ENCODE measurements at regions of chr5 and their contacts with region 1.

Region 1: GRCh38 chr5:76771705-76772405 is 47.0 kb upstream of the F2RL1 start:
- DNase-seq: no peak
- H3K4me3 ChIP-seq: no peak overlapping the region
- CTCF ChIP-seq: no peak

Region 2: DNA sequence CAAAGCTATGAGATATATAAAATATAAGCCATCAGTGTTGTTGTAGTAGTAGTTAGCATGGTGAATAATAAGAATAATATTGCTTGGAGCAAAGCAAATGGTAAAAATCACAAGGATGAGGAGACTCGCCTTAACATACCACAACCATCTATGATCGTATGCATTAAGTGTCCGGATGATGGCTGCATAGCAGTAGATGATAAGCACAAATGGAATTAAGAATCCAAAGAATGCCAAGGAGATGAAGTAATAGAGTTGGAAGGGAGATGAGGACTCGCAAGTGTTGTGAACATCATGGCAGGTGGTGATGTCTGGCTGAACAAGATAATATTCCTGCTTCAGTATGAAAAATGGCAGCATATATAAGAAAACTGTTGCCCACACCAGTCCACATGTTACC is 154.2 kb before region 1 on chr5:
- CTCF ChIA-PET with region 1: interaction called, 363 read pairs
- POLR2A ChIA-PET with region 1: no interaction called
- DNase-seq: peak; percentile 92
- H3K4me3 ChIP-seq: no peak overlapping the region
- CTCF ChIP-seq: no peak

Region 3: GRCh38 chr5:76657683-76658311 is 114.1 kb before region 1 on chr5:
- CTCF ChIA-PET with region 1: interaction called, 24 read pairs
- POLR2A ChIA-PET with region 1: no interaction called
- DNase-seq: no peak
- H3K4me3 ChIP-seq: no peak overlapping the region
- CTCF ChIP-seq: no peak

Region 4: DNA sequence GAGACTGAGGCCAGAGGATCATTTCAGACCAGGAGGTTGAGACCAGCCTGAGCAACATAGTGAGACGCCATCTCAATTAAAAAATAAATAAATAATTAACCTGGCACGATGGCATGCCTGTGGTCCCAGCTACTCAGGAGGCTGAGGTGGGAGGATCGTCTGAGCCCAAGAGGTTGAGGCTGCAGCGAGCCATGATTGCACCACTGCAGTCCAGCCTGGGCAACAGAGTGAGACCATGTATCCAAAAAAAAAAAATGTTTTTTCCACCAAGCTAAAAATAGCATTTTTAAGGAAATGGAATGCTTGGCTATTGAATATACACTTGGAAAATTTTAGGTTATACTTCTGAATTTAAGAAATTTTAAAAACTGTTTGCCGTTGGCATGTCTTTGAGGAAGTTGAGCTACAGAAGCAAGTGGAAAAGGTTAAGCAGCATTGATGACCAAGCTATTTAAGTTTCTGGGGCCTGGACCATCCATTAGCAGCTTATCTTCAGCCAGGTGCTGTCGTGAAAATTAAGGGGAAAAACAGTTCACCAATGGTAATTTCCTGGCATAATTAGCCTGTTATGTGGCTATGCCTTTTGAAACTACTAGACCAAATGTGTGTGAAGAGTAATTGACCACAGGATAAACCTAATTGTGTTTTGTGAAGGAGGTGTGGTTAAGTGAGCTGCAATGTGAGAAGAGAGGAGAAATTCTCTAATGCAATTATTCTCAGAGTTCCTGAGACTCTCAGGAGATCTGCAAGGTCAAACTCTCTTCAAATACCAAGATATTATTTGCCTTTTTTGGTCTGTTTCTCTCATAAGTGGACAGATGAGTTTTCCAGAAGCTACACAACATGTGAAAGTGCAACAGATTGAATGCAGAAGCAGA is 34.9 kb before region 1 on chr5:
- CTCF ChIA-PET with region 1: interaction called, 20 read pairs
- POLR2A ChIA-PET with region 1: no interaction called
- DNase-seq: no peak
- H3K4me3 ChIP-seq: no peak overlapping the region
- CTCF ChIP-seq: no peak

Region 5: DNA sequence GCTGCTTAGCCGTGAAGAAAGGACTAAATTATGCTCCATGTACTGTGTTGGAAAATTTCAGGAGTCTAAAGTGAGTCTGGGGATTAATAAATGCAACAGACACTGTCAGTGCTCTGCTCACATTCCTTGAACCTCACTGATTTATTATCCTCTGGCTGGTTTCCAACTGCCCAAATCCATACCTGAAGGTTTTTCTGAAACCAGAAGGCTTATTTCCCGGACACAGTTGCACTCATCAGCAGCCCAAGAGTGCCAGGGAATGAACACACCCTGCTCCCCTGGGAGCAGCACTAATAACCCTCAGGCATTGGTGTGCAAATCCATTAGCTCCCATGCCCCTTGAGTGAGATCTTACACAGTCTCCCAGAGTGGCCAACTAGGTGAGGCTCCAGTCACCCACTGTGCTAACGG is 17.2 kb before region 1 on chr5:
- CTCF ChIA-PET with region 1: interaction called, 35 read pairs
- POLR2A ChIA-PET with region 1: no interaction called
- DNase-seq: no peak
- H3K4me3 ChIP-seq: no peak overlapping the region
- CTCF ChIP-seq: no peak

Region 6: DNA sequence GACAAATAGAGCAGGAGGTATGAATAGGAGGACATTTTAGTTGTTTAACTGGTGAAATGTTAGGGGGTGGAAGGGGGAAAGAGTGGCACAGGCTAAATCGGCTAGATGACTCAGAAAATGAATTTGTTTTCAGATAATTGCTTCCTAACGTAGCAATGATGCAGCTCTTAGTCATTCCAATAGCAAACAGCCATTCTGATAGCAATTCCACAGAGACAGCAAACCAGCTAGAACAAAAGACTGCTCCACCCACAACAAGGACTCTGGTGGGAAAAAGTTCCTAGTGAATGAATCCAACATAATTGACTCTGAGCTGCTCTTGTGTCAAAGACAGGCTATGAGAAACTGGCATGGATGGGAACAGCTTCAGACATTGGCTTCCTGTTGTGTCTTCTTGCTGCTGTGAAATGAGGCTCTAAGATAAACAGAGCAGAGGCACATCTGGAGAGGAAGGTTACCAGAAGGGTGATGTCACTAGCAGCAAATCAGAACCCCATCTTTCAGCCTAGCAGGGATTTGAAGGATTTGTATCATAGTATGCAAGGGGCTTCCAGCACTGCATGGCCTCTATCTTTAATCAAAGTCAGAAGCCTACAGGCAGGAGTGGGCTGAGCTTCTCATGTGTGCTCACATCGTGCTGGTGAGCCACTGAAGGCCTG is 18.9 kb after region 1 on chr5:
- CTCF ChIA-PET with region 1: interaction called, 41 read pairs
- POLR2A ChIA-PET with region 1: no interaction called
- DNase-seq: peak; percentile 91
- H3K4me3 ChIP-seq: no peak overlapping the region
- CTCF ChIP-seq: no peak

Region 7: DNA sequence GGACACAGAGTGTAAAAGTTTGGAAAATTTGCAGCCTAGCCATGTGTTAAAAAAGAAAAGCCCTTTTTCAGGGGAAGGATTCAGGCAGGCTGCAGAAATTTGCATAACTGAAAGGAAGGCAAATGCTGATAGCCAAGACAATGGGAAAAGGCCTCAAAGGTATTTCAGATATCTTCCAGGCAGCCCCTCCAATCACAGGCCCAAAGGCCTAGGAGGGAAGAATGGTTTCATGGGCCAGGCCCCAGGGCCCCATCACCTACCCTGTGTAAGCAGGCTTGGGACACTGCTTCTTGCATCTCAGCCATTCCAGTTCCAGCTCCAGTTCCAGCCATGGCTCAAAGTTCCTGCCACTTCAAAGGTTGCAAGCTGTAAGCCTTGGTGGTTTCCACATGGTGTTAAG is 82.8 kb after region 1 on chr5:
- CTCF ChIA-PET with region 1: no interaction called
- POLR2A ChIA-PET with region 1: no interaction called
- DNase-seq: no peak
- H3K4me3 ChIP-seq: no peak overlapping the region
- CTCF ChIP-seq: no peak

Region 8: DNA sequence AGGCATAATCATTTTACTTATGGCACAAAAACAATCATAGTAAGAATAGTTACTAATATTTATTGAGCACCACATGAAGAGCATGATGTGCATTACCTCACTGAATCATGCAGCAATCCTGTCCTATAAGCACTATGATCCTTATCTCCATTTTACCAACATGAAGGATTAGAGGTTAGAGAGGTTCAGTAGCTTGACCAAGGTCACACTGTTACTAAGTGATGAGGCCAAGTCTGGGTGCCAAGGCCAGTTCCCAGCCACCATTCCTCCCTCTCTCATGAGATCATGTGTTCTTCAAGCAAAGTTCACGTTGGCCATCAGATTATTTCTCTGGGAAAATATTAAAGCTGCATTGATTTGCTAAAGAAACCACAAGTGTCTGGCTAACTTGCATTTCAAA is 469.6 kb after region 1 on chr5:
- CTCF ChIA-PET with region 1: no interaction called
- POLR2A ChIA-PET with region 1: no interaction called
- DNase-seq: no peak
- H3K4me3 ChIP-seq: no peak overlapping the region
- CTCF ChIP-seq: no peak